MCF 10A (cell line): ENCODE measurements at regions of chr3 and their contacts with region 1.

Region 1: DNA sequence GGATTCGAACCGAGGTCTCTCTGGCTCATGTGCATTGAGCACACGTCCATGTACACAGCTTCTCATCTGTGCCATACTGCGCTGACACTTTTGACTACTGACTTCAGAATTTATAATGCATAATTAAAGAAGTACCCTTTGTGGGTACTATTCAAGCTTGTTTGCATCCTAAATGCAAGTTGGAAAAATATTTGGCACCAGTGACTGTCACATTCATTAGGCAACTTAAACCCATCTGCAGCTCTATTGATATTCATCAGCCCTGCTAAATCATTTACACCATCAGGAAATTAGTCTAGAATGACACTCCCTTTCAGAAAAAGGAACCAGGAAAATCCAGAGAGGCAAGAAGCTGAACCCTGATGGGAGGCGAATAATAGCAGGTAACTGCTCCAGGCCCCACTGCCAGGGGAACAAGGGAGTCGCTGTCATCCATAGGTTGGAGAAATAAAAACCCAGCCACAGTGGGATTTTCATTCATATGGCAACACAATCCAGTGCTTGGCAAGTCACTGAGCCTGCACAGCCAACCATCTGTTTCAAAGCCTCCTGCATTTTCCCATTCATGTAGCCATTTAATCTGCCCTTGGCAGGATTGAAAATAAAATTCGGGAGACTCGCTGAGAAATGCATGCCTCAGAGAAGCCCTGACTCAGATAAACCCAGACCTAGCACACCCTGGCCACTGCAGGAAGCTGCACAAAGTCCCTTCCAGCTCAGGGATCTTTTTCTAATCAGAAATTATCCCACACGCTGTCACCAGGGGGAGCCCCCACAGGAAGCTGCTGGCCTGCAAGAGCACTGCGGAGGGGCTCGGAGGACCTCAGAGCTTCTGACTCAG is 103.0 kb upstream of the VEPH1 start:
- DNase-seq: peak; percentile 65
- H3K4me3 Mint-ChIP-seq: no peak overlapping the region
- H3K27ac Mint-ChIP-seq: no peak overlapping the region
- H3K4me1 Mint-ChIP-seq: no peaks in the 10 kb centered on the region
- H3K27me3 Mint-ChIP-seq: no peaks in the 10 kb centered on the region
- CTCF ChIP-seq: peak; percentile 83

Region 2: DNA sequence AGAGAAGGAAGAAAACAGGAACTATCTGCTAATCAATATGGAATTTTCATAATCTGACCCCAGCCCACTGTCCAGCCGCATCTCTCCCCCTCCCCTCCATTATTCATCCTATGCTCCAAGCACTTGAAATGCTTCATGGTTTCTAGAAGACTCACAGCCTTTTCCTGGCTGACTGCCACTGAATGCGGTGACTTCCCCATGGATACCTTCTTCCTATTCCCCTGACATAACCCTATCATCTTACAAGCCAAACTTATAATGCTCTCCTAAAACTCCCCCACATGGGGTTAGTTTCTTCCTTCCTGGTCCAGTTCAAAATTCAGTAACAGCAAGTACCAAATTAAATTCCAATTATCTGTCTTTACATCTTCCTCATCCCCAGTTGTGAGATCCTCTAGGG is 200.8 kb before region 1 on chr3:
- CTCF ChIA-PET with region 1: no interaction called
- POLR2A ChIA-PET with region 1: no interaction called
- intact Hi-C with region 1: no loop called
- DNase-seq: no peak
- H3K4me3 Mint-ChIP-seq: no peak overlapping the region
- H3K27ac Mint-ChIP-seq: no peak overlapping the region
- H3K4me1 Mint-ChIP-seq: peaks cover 12% of the 10 kb centered on the region
- H3K27me3 Mint-ChIP-seq: no peaks in the 10 kb centered on the region
- CTCF ChIP-seq: no peak

Region 3: GRCh38 chr3:157594413-157594812 is 11.8 kb before region 1 on chr3:
- CTCF ChIA-PET with region 1: interaction called, 36 read pairs
- POLR2A ChIA-PET with region 1: interaction called, 3 read pairs
- intact Hi-C with region 1: no loop called
- DNase-seq: no peak
- H3K4me3 Mint-ChIP-seq: no peak overlapping the region
- H3K27ac Mint-ChIP-seq: no peak overlapping the region
- H3K4me1 Mint-ChIP-seq: no peaks in the 10 kb centered on the region
- H3K27me3 Mint-ChIP-seq: peaks cover 32% of the 10 kb centered on the region
- CTCF ChIP-seq: no peak

Region 4: GRCh38 chr3:157819270-157820156 is 213.3 kb after region 1 on chr3:
- CTCF ChIA-PET with region 1: no interaction called
- POLR2A ChIA-PET with region 1: no interaction called
- intact Hi-C with region 1: no loop called
- DNase-seq: no peak
- H3K4me3 Mint-ChIP-seq: no peak overlapping the region
- H3K27ac Mint-ChIP-seq: no peak overlapping the region
- H3K4me1 Mint-ChIP-seq: no peaks in the 10 kb centered on the region
- H3K27me3 Mint-ChIP-seq: no peaks in the 10 kb centered on the region
- CTCF ChIP-seq: no peak

Region 5: GRCh38 chr3:158532099-158532734 is 926.0 kb after region 1 on chr3:
- CTCF ChIA-PET with region 1: interaction called, 13 read pairs
- POLR2A ChIA-PET with region 1: no interaction called
- intact Hi-C with region 1: loop called (anchors 1 kb)
- DNase-seq: peak; percentile 77
- H3K4me3 Mint-ChIP-seq: no peak overlapping the region
- H3K27ac Mint-ChIP-seq: no peak overlapping the region
- H3K4me1 Mint-ChIP-seq: peaks cover 7% of the 10 kb centered on the region
- H3K27me3 Mint-ChIP-seq: no peaks in the 10 kb centered on the region
- CTCF ChIP-seq: peak; percentile 64